HCT116 (cell line): ENCODE measurements at regions of chr5 and their contacts with region 1.

Region 1: GRCh38 chr5:317086-317811 is 4.3 kb upstream of the AHRR start:
- DNase-seq: peak; percentile 52
- ATAC-seq: peak; percentile 76
- H3K4me3 ChIP-seq: no peak overlapping the region
- H3K27ac ChIP-seq: peak overlapping the region; percentile 39; the same call in 1 of the 2 replicates
- H3K4me1 ChIP-seq: peaks cover 17 to 49% of the 10 kb centered on the region in 2 experiments
- H3K27me3 ChIP-seq: no peaks in the 10 kb centered on the region
- CTCF ChIP-seq: peak; percentile 77 to 92 (median 91)
- POLR2A ChIP-seq: no peak
- RAD21 ChIP-seq: peak; percentile 91

Region 2: GRCh38 chr5:217860-218456 is 99.3 kb before region 1 on chr5 and contains the starts of genes CCDC127 and SDHA:
- CTCF ChIA-PET with region 1: no interaction called
- POLR2A ChIA-PET with region 1: no interaction called
- RAD21 ChIA-PET with region 1: no interaction called
- intact Hi-C with region 1: no loop called
- DNase-seq: peak; percentile 75
- ATAC-seq: peak; percentile 91
- H3K4me3 ChIP-seq: peak within 1 kb of the TSS; percentile 86
- H3K27ac ChIP-seq: peak within 1 kb of the TSS; percentile 74
- H3K4me1 ChIP-seq: peaks cover 0 to 10% of the 10 kb centered on the region in 2 experiments; a peak in 1 of 4 replicates
- H3K27me3 ChIP-seq: no peaks in the 10 kb centered on the region
- CTCF ChIP-seq: peak; percentile 29 to 48 (median 46); a peak in 5 of 6 replicates
- POLR2A ChIP-seq: peak; percentile 79
- RAD21 ChIP-seq: 0 out of 2 replicates have a peak, but pooled peaks have one; percentile 6
- total RNA-seq, gene CCDC127: 5.1 TPM
- total RNA-seq, gene SDHA: 134 TPM

Region 3: DNA sequence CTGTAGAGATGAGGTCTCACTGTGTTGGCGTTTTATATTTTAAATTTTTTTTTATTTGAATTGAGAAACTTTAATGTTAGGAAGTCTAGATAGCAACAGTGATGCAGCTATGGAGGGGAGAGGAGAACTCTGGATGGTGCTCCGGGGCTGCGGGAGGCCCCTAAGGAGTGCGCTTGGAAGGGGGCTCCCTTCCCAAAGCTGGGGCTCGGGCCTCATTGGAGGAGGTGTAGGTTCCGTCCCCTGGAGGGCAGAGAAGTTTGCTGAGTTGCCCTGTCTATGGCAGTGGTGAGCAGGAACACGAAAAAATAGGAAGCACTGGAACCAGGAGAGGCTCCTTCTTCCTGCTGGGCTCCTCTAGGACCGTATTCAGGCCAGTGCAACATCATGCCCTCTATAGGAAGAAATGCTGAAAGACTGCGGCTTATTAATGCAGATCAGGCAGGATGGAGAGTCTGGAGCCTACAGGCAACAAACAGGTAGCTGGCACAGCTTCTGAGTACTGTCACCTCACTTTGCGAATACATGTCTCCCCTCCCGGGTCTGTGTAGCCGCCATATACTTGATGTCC is 20.4 kb after region 1 on chr5:
- CTCF ChIA-PET with region 1: interaction called, 15 read pairs
- POLR2A ChIA-PET with region 1: no interaction called
- RAD21 ChIA-PET with region 1: interaction called in 1 of 2 experiments, 4 read pairs
- intact Hi-C with region 1: no loop called
- DNase-seq: peak; percentile 59
- ATAC-seq: peak; percentile 98
- H3K4me3 ChIP-seq: peak overlapping the region in 1 of 2 experiments; percentile 20; a peak in 1 of 4 replicates
- H3K27ac ChIP-seq: no peak overlapping the region
- H3K4me1 ChIP-seq: peaks cover 6 to 21% of the 10 kb centered on the region in 2 experiments; a peak in 3 of 4 replicates
- H3K27me3 ChIP-seq: no peaks in the 10 kb centered on the region
- CTCF ChIP-seq: peak; percentile 63 to 70 (median 65); a peak in 5 of 6 replicates
- POLR2A ChIP-seq: no peak
- RAD21 ChIP-seq: peak; percentile 50

Region 4: GRCh38 chr5:424301-425110 is 107.3 kb after region 1 on chr5:
- CTCF ChIA-PET with region 1: interaction called, 42 read pairs
- POLR2A ChIA-PET with region 1: no interaction called
- RAD21 ChIA-PET with region 1: interaction called, 4 to 6 read pairs
- intact Hi-C with region 1: no loop called
- DNase-seq: no peak
- ATAC-seq: no peak
- H3K4me3 ChIP-seq: no peak overlapping the region
- H3K27ac ChIP-seq: no peak overlapping the region
- H3K4me1 ChIP-seq: peaks cover 0 to 9% of the 10 kb centered on the region in 2 experiments; a peak in 3 of 4 replicates
- H3K27me3 ChIP-seq: no peaks in the 10 kb centered on the region
- CTCF ChIP-seq: no peak
- POLR2A ChIP-seq: no peak
- RAD21 ChIP-seq: no peak

Region 5: GRCh38 chr5:431001-431710 is 113.9 kb after region 1 on chr5:
- CTCF ChIA-PET with region 1: interaction called, 42 read pairs
- POLR2A ChIA-PET with region 1: no interaction called
- RAD21 ChIA-PET with region 1: interaction called, 4 to 6 read pairs
- intact Hi-C with region 1: loop called (anchors 1 kb)
- DNase-seq: peak; percentile 23
- ATAC-seq: peak; percentile 99
- H3K4me3 ChIP-seq: no peak overlapping the region
- H3K27ac ChIP-seq: no peak overlapping the region
- H3K4me1 ChIP-seq: peaks cover 0 to 14% of the 10 kb centered on the region in 2 experiments; a peak in 1 of 4 replicates
- H3K27me3 ChIP-seq: no peaks in the 10 kb centered on the region
- CTCF ChIP-seq: peak; percentile 80 to 91 (median 82)
- POLR2A ChIP-seq: no peak
- RAD21 ChIP-seq: peak; percentile 88

Region 6: DNA sequence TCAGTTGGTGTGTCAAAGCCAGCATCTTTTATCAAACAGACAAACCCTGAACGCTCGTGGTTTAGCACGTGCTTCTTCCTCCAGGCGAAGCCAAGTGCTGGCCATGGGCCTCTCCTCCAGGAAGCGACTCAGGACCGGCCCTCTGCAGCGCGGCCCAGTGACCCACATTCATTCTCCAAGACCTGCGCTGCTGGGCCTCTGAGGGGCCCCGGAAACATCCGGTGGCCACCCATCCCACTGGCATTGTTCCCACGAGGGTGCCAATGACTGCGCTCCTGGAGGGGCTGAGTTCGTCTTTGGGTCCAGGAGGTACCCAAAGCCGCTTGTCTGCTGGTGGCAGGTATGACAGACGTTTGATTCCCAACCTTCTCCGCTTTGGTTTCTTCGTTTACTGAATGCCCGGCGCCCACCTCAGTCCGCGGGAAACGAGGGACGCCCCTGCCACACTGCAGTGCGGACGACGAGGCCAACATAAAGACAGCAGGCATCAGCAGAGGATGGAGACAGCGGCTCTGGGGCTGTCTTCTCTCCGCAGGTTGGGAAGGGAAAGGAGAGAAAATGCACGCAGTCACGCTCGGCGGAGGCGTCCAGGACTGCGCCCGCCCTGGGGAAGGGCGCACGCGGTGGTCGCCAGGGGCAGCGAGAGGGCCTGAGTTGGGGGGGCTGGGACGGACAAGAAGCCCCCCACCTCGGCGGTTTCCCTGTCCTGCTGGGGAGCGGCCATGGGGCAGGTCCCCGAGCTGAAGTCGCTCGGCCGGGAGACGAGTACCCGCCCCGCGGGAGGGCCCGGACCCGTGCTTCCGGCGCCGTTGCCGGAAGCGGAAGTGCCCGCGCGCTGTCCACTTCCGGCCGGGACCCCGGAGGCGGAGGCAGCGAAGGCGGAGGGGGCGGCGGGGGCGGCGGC is 125.3 kb after region 1 on chr5 and contains the start of gene EXOC3:
- CTCF ChIA-PET with region 1: interaction called, 21 read pairs
- POLR2A ChIA-PET with region 1: no interaction called
- RAD21 ChIA-PET with region 1: interaction called, 3 to 8 read pairs
- intact Hi-C with region 1: no loop called
- DNase-seq: peak; percentile 34
- ATAC-seq: peak; percentile 87
- H3K4me3 ChIP-seq: peak within 1 kb of the TSS; percentile 98 to 99
- H3K27ac ChIP-seq: peak within 1 kb of the TSS; percentile 86
- H3K4me1 ChIP-seq: peaks cover 12 to 30% of the 10 kb centered on the region in 2 experiments
- H3K27me3 ChIP-seq: no peaks in the 10 kb centered on the region
- CTCF ChIP-seq: no peak
- POLR2A ChIP-seq: peak; percentile 71
- RAD21 ChIP-seq: no peak
- total RNA-seq, gene EXOC3: 52.4 TPM

Region 7: GRCh38 chr5:472656-473553 is 155.7 kb after region 1 on chr5:
- CTCF ChIA-PET with region 1: interaction called, 11 read pairs
- POLR2A ChIA-PET with region 1: no interaction called
- RAD21 ChIA-PET with region 1: no interaction called
- intact Hi-C with region 1: no loop called
- DNase-seq: peak; percentile 54
- ATAC-seq: peak; percentile 81
- H3K4me3 ChIP-seq: peak overlapping the region; percentile 77 to 82
- H3K27ac ChIP-seq: peak overlapping the region; percentile 85
- H3K4me1 ChIP-seq: peaks cover 5 to 16% of the 10 kb centered on the region in 2 experiments; a peak in 3 of 4 replicates
- H3K27me3 ChIP-seq: no peaks in the 10 kb centered on the region
- CTCF ChIP-seq: no peak
- POLR2A ChIP-seq: peak; percentile 86
- RAD21 ChIP-seq: no peak